Mammary epithelial cell (primary cell): ENCODE measurements at regions of chr3 and their contacts with region 1.

Region 1: DNA sequence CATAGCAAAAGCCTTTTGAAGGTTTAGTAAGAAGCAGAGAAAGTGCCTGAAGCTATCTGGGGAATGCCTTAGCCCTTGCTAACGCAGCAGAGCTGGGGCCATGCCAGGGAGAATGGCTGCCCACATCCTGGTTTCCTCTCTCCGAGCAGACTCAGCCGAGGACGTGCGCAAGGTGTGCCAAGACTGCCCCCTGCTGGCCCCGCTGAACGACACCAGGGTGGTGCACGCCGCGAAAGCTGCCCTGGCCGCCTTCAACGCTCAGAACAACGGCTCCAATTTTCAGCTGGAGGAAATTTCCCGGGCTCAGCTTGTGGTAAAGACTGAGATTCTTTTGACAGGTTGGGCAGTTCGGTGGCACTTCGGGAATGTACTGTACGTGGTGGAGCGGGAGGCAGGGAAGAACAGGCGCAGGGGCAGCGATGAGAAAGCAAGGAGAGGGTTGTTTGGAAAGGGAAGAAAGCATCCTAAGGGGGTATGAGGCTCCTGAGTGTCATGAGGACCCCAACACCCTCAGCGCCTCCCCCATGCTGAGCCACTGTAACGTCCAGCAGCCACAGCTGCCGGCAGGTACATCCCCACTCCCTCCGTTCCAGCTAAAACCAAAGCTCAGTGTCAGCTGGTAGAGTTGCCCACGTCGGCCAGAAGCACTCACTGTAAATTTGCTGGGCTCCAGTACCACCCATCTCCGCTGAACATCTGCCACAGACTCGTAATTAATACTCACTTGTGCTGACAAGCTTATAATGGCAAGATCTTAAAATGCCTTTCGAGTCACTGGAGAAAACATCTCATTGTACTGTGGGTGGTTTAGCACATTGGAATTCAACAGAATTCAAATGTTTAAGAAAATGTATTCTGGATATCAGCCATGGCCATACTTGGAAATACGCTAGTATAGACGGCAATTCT is 4.4 kb downstream of the AHSG start:
- DNase-seq: peak; percentile 98
- H3K4me3 ChIP-seq: peak overlapping the region; percentile 42 to 55 (median 48)
- H3K27ac ChIP-seq: peak overlapping the region; percentile 69
- H3K4me1 ChIP-seq: peaks cover 25% of the 10 kb centered on the region
- H3K27me3 ChIP-seq: no peaks in the 10 kb centered on the region
- CTCF ChIP-seq: peak; percentile 97 to 98

Region 2: DNA sequence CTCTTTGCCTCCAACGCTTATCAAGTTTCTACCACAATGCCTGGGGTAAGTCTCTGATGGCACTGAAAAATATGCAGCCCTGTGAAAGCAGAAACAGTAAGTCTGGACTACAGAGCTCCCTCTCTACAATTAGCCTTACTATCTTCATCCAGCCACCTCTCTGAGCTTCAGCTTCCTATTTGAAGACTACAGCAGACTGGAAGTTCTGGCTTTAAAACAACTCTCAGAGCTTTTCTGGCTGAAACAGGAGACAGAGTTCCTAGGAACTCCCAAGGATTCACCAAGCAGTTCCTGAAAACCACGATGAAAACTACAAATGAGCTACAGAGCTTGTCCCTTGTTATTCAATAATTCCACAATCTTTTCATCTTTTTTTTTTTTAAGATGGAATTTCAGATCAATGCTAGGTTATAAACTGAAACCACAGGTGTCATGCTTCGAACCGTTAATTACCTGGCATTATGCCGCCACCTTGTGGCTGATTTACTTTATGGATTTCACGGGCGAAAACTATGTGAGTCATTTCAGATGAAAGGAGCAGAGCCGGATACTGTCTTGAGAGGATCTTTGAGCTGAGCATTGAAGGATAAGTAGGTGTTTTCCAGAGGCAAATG is 77.0 kb before region 1 on chr3:
- CTCF ChIA-PET with region 1: interaction called, 6 read pairs
- dilution Hi-C with region 1: no loop called
- in situ Hi-C with region 1: no loop called
- intact Hi-C with region 1: loop called (anchors 2 kb)
- DNase-seq: peak; percentile 78
- H3K4me3 ChIP-seq: no peak overlapping the region
- H3K27ac ChIP-seq: peak overlapping the region; percentile 4
- H3K4me1 ChIP-seq: peaks cover 17% of the 10 kb centered on the region
- H3K27me3 ChIP-seq: no peaks in the 10 kb centered on the region
- CTCF ChIP-seq: peak; percentile 64 to 66

Region 3: DNA sequence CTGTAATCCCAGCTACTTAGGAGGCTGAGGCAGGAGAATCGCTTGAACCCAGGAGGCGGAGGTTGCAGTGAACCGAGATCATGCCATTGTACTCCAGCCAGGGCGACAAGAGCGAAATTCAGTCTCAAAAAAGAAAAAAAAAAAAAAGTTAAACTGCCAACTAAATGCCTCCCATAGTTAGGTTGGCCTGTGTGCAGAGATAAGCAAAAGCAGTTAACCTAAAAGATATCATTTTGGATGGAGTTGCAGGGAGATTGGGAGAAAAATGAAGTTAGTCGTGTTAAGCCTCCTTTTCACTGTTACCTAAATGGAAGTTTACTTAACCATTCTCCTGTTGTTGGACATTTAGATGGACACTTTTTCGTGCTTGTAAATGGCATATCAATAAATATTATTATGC is 11.5 kb after region 1 on chr3:
- CTCF ChIA-PET with region 1: no interaction called
- dilution Hi-C with region 1: no loop called
- in situ Hi-C with region 1: no loop called
- intact Hi-C with region 1: no loop called
- DNase-seq: no peak
- H3K4me3 ChIP-seq: no peak overlapping the region
- H3K27ac ChIP-seq: no peak overlapping the region
- H3K4me1 ChIP-seq: no peaks in the 10 kb centered on the region
- H3K27me3 ChIP-seq: no peaks in the 10 kb centered on the region
- CTCF ChIP-seq: no peak

Region 4: GRCh38 chr3:186640473-186640818 is 23.2 kb after region 1 on chr3:
- CTCF ChIA-PET with region 1: interaction called, 3 read pairs
- dilution Hi-C with region 1: no loop called
- in situ Hi-C with region 1: no loop called
- intact Hi-C with region 1: loop called (anchors 1 kb)
- DNase-seq: peak; percentile 98
- H3K4me3 ChIP-seq: no peak overlapping the region
- H3K27ac ChIP-seq: peak overlapping the region; percentile 53
- H3K4me1 ChIP-seq: peaks cover 65% of the 10 kb centered on the region
- H3K27me3 ChIP-seq: no peaks in the 10 kb centered on the region
- CTCF ChIP-seq: no peak

Region 5: DNA sequence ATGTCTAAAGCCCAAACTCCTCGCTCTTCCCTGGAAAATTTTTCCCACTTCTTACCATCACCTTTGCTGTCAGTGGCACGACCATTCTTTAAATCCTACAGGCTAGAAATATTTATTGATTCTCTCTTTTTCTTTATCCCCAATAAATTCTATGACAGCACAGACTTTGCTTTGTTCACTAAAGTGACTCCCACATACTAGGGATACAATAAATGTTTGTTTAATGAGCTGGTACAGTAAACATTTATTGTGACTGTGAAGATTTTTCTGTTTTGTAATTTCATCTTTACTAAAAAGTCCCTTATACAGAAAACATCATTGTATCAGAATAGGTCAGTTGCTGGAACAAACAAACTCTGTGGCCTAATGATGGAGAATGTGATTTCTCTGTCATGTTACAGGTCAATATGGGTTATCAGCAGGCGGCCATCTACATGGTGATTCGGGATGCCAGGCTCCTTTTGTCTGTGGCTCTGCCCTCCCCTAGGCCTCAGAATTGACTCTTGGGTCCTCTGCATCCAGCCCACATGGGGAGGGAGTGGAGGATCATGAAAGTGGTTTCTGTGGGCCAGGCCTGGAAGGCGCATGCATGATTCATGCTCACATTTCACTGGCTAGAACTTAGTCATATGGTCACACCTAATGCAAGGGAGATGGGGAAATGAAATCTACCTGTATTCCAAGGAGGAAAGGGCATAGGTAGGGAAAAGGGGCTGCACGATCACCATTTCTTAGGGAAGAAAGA is 77.2 kb after region 1 on chr3:
- CTCF ChIA-PET with region 1: interaction called, 4 read pairs
- dilution Hi-C with region 1: no loop called
- in situ Hi-C with region 1: no loop called
- intact Hi-C with region 1: loop called (anchors 5 kb)
- DNase-seq: peak; percentile 77
- H3K4me3 ChIP-seq: no peak overlapping the region
- H3K27ac ChIP-seq: no peak overlapping the region
- H3K4me1 ChIP-seq: peaks cover 39% of the 10 kb centered on the region
- H3K27me3 ChIP-seq: no peaks in the 10 kb centered on the region
- CTCF ChIP-seq: no peak

Region 6: DNA sequence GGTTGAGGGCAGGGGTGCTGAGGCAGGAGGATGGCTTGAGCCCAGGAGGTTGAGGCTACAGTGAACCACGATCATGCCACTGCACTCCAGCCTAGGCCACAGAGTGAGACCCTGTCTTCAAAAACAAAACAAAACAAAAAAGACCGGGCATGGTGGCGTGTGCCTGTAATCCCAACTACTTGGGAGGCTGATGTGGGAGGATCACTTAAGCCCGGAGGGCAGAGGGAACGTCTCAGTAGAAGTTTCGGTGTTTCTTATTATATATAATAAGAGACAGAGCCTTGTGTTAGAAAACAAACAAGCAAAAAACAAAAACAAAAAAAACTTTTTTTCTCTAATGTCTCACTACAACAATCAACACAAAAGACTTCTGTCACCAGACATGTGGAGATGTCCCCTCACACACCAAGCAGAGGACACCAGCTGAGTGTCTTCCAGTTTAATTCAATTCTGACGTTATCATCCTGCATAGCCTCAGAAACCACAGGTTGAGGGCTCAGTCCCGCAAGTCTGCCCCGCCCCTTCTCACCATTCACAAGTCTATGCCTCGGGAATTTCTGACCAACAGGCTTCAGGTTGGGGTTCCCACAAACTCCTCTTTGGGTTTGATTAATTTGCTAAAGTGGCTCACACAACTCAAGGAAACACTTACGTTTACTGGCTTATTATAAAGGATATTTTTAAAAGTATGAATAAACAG is 142.1 kb after region 1 on chr3:
- CTCF ChIA-PET with region 1: no interaction called
- dilution Hi-C with region 1: no loop called
- in situ Hi-C with region 1: loop called in 1 of 2 experiments (anchors 10 kb)
- intact Hi-C with region 1: no loop called
- DNase-seq: no peak
- H3K4me3 ChIP-seq: no peak overlapping the region
- H3K27ac ChIP-seq: no peak overlapping the region
- H3K4me1 ChIP-seq: peaks cover 4% of the 10 kb centered on the region
- H3K27me3 ChIP-seq: no peaks in the 10 kb centered on the region
- CTCF ChIP-seq: no peak

Region 7: GRCh38 chr3:186815435-186815834 is 198.1 kb after region 1 on chr3:
- CTCF ChIA-PET with region 1: no interaction called
- dilution Hi-C with region 1: no loop called
- in situ Hi-C with region 1: loop called in 1 of 2 experiments (anchors 10 kb)
- intact Hi-C with region 1: no loop called
- DNase-seq: peak; percentile 61
- H3K4me3 ChIP-seq: no peak overlapping the region
- H3K27ac ChIP-seq: no peak overlapping the region
- H3K4me1 ChIP-seq: peaks cover 7% of the 10 kb centered on the region
- H3K27me3 ChIP-seq: no peaks in the 10 kb centered on the region
- CTCF ChIP-seq: no peak

Region 8: GRCh38 chr3:187714404-187714979 is 1097.2 kb after region 1 on chr3:
- CTCF ChIA-PET with region 1: no interaction called
- dilution Hi-C with region 1: no loop called
- in situ Hi-C with region 1: no loop called
- intact Hi-C with region 1: loop called (anchors 10 kb)
- DNase-seq: peak; percentile 70
- H3K4me3 ChIP-seq: no peak overlapping the region
- H3K27ac ChIP-seq: no peak overlapping the region
- H3K4me1 ChIP-seq: no peaks in the 10 kb centered on the region
- H3K27me3 ChIP-seq: no peaks in the 10 kb centered on the region
- CTCF ChIP-seq: peak; percentile 96 to 98